Activated naive CD4-positive, alpha-beta T cell treated with anti-CD3 and anti-CD28 coated beads for 36 hours (primary cell): ENCODE measurements at regions of chr3 and their contacts with region 1.

Region 1: DNA sequence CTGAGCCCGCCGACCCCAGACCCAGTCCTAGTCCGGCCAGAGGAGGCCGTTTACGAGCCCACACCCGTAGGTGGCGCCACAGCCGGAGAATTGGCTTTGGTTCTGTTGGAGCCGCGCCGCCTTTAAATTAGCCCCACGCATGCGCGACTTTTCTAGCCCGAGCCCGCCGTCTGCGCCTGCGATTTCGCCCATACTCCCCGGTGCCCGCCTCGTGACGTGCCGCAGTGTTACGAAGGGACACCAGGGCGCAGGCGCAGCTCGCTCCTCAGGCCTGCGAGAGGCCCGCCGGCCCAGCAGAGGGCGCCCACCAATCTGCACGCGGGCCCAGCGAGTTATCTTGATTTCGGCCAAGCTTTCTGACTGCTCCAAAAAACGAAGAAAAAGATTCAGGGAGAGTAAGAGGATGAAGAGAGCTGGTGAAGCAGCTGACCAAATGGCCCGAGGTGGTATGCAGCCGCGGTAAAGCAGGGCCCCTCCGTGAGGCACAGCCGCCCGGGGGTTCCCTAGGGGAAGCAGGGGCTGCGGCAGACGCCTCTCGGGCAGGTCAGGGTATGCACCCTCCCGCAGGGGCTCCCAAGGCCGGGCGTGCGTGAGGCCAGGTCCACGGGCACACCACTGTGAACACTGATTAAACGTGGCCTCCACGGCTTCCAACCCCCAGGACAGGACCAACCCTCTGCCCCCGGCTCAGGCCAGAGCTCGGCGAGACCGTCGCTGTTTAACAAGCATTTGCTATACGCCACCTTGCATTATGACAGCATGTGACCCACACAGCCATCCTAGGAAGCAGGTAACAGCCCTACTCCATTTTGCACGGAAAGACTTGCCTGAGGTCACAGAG is 32.8 kb downstream of the RPN1 start:
- DNase-seq: peak; percentile 99
- H3K4me3 Mint-ChIP-seq: peak overlapping the region; percentile 95
- H3K27ac Mint-ChIP-seq: peak overlapping the region; percentile 89
- H3K4me1 Mint-ChIP-seq: peaks cover 32% of the 10 kb centered on the region
- H3K27me3 Mint-ChIP-seq: no peaks in the 10 kb centered on the region

Region 2: DNA sequence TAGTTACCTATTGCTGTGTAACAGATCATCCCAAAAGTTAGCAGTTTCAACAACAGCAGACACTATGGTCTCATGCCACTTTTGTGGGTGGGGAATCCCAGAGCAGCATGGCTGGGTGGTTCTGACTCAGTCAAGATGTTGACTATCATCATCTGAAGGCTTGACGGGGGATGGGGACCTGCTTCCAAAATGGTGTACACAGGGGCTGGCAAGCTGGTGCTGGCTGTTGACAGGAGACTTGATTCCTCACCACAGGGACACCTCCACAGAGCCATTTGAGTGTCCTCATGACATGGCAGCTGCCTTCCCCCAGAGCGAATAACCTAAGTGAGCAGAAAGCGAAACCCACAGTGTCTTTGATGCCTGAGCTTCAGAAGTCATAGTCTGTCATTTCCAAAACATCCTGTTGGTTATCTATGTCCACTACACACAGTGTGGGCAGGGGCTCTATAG is 170.2 kb before region 1 on chr3:
- CTCF ChIA-PET with region 1: no interaction called
- intact Hi-C with region 1: loop called (anchors 1 kb)
- DNase-seq: peak; percentile 95
- H3K4me3 Mint-ChIP-seq: no peak overlapping the region
- H3K27ac Mint-ChIP-seq: peak overlapping the region; percentile 95
- H3K4me1 Mint-ChIP-seq: peaks cover 33% of the 10 kb centered on the region
- H3K27me3 Mint-ChIP-seq: peaks cover 2% of the 10 kb centered on the region

Region 3: GRCh38 chr3:128650096-128651050 is 32.6 kb after region 1 on chr3 and contains the start of gene RPN1:
- CTCF ChIA-PET with region 1: interaction called, 14 read pairs
- intact Hi-C with region 1: loop called (anchors 1 kb)
- DNase-seq: peak; percentile 97
- H3K4me3 Mint-ChIP-seq: peak within 1 kb of the TSS; percentile 83
- H3K27ac Mint-ChIP-seq: peak within 1 kb of the TSS; percentile 88
- H3K4me1 Mint-ChIP-seq: peaks cover 30% of the 10 kb centered on the region
- H3K27me3 Mint-ChIP-seq: no peaks in the 10 kb centered on the region
- total RNA-seq, gene RPN1: 124 to 129 TPM

Region 4: GRCh38 chr3:128725932-128726690 is 108.3 kb after region 1 on chr3 and contains the start of gene RAB7A:
- CTCF ChIA-PET with region 1: interaction called, 3 read pairs
- intact Hi-C with region 1: loop called (anchors 2 kb)
- DNase-seq: peak; percentile 99
- H3K4me3 Mint-ChIP-seq: peak within 1 kb of the TSS; percentile 81
- H3K27ac Mint-ChIP-seq: peak within 1 kb of the TSS; percentile 89
- H3K4me1 Mint-ChIP-seq: peaks cover 53% of the 10 kb centered on the region
- H3K27me3 Mint-ChIP-seq: no peaks in the 10 kb centered on the region
- total RNA-seq, gene RAB7A: 222 to 228 TPM

Region 5: GRCh38 chr3:128804017-128804810 is 186.4 kb after region 1 on chr3:
- CTCF ChIA-PET with region 1: interaction called, 4 read pairs
- intact Hi-C with region 1: loop called (anchors 1 kb)
- DNase-seq: peak; percentile 86
- H3K4me3 Mint-ChIP-seq: peak overlapping the region; percentile 45
- H3K27ac Mint-ChIP-seq: peak overlapping the region; percentile 96
- H3K4me1 Mint-ChIP-seq: peaks cover 87% of the 10 kb centered on the region
- H3K27me3 Mint-ChIP-seq: no peaks in the 10 kb centered on the region

Region 6: GRCh38 chr3:128922804-128923459 is 305.2 kb after region 1 on chr3:
- CTCF ChIA-PET with region 1: interaction called, 7 read pairs
- intact Hi-C with region 1: loop called (anchors 1 kb)
- DNase-seq: peak; percentile 80
- H3K4me3 Mint-ChIP-seq: peak overlapping the region; percentile 73
- H3K27ac Mint-ChIP-seq: peak overlapping the region; percentile 80
- H3K4me1 Mint-ChIP-seq: peaks cover 48% of the 10 kb centered on the region
- H3K27me3 Mint-ChIP-seq: no peaks in the 10 kb centered on the region

Region 7: DNA sequence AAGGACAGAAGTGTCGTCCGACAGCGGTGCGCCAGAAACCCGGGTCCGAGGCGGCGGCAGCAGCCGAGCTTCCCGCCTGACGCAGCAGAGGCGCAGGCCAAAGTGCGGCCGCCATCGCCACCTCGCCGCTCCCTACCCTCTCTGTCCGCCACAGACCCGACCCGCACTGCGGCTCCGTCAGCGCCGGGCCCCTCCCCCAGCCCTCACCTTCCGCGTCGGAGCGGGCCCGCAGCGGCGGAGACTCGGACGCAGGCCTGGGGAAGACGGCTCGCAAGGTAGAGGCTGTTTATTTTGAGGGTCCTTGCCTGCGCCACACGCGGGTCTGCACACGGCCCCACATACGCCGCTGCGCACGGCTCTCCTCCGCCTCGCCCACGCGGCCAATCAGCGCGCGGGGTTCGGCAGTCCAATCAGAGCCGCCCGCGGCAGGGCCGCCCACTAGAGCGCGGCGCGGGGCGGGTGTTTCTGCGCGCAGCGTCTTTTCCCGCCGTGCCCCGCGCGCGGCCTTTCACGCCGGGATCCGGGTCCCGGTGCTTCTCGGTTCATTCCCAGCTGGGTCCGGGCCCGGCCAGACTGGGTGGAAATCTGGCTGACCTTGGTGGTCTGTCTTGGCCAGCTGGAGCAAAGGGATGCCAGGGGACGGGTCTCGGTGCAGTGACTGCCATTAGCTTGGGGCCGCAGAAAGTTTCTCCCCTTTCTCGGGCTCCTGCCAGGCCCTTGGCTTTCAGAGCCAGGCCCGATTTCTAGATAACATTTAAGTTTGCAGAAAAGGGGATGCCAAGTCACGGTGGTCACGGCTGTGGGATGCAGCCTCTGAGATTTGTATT is 566.0 kb after region 1 on chr3 and contains the start of gene CNBP:
- CTCF ChIA-PET with region 1: no interaction called
- intact Hi-C with region 1: loop called (anchors 2 kb)
- DNase-seq: peak; percentile 93
- H3K4me3 Mint-ChIP-seq: peak within 1 kb of the TSS; percentile 96
- H3K27ac Mint-ChIP-seq: peak within 1 kb of the TSS; percentile 95
- H3K4me1 Mint-ChIP-seq: peaks cover 35% of the 10 kb centered on the region
- H3K27me3 Mint-ChIP-seq: no peaks in the 10 kb centered on the region
- total RNA-seq, gene CNBP: 490 to 500 TPM